ENCODE measurements at regions of chr17 and their contacts with region 1.

Region 1: DNA sequence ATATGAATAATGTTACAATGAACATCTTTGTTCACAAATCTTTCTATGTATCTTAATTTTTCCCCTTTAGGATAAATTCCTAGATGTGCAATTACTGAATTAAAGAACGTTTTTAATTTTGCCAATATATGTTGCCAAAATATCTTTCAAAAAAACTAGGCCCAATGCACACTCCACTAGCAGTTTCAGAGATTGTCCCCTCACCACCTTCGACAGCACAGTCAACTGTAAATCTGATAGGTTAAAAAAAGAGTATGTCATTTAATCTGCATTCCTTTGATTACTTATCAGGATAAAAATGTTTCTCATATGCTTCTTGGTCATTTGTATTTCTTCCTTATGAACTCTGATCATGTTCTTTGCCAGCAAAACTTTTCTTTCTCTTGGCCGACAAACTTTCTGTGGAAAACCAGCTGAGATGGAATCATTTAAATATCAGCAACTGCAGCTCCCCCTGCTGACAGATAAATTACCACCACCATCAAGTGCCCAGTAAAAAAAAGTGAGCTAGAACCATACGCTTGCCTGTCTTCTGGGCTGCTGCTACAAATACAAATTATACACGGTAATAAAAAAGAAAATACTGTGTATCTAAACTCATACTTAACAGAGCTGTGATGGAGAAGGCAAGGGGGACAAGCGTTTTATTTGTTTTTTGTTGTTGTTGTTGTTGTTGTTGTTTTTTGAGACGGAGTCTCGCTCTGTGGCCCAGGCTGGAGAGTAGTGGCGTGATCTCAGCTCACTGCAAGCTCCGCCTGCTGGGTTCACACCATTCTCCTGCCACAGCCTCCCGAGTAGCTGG is 19.6 kb upstream of the KANSL1 start:
- DNase-seq: peak; percentile 33 to 90 (median 63)
- ATAC-seq: peak; percentile 88
- H3K4me3 ChIP-seq: no peak overlapping the region
- H3K4me3 Mint-ChIP-seq: no peak overlapping the region
- H3K27ac ChIP-seq: no peak overlapping the region
- H3K27ac Mint-ChIP-seq: peak overlapping the region; percentile 38
- H3K4me1 ChIP-seq: peaks cover 14% of the 10 kb centered on the region
- H3K4me1 Mint-ChIP-seq: peaks cover 26% of the 10 kb centered on the region
- H3K27me3 ChIP-seq: no peaks in the 10 kb centered on the region
- H3K27me3 Mint-ChIP-seq: no peaks in the 10 kb centered on the region
- CTCF ChIP-seq: peak; percentile 85

Region 2: DNA sequence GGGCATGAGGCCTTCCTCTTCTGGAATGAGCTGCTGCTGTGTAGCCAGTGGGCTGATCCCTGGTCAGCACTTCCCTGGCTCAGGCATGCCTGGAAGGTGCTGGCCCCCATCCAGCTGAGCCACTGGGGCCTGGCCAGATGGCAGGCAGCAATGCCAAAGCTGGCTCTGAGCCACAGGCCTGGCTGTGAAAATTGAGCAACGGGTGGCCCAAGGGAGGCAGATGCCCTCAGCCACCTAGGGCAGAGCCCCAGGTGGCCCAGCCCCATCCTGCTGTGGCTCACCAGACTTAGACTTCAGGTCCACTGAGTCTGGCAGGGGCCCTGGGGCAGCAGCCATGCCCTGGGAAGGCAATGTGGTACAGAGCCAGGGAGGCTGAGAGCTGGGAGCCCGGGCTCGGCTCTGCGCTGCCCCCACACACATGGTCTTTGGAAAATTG is 437.2 kb before region 1 on chr17:
- CTCF ChIA-PET with region 1: no interaction called
- POLR2A ChIA-PET with region 1: no interaction called
- intact Hi-C with region 1: no loop called
- DNase-seq: no peak
- ATAC-seq: no peak
- H3K4me3 ChIP-seq: no peak overlapping the region
- H3K4me3 Mint-ChIP-seq: no peak overlapping the region
- H3K27ac ChIP-seq: no peak overlapping the region
- H3K27ac Mint-ChIP-seq: no peak overlapping the region
- H3K4me1 ChIP-seq: no peaks in the 10 kb centered on the region
- H3K4me1 Mint-ChIP-seq: no peaks in the 10 kb centered on the region
- H3K27me3 ChIP-seq: no peaks in the 10 kb centered on the region
- H3K27me3 Mint-ChIP-seq: peaks cover 49% of the 10 kb centered on the region
- CTCF ChIP-seq: no peak

Region 3: GRCh38 chr17:46035112-46035818 is 177.6 kb before region 1 on chr17:
- CTCF ChIA-PET with region 1: interaction called, 14 read pairs
- POLR2A ChIA-PET with region 1: no interaction called
- intact Hi-C with region 1: no loop called
- DNase-seq: peak in 2 of 9 experiments; percentile 55 to 63
- ATAC-seq: no peak
- H3K4me3 ChIP-seq: no peak overlapping the region
- H3K4me3 Mint-ChIP-seq: no peak overlapping the region
- H3K27ac ChIP-seq: peak overlapping the region in 1 of 2 experiments; percentile 21
- H3K27ac Mint-ChIP-seq: peak overlapping the region; percentile 60
- H3K4me1 ChIP-seq: no peaks in the 10 kb centered on the region
- H3K4me1 Mint-ChIP-seq: peaks cover 3% of the 10 kb centered on the region
- H3K27me3 ChIP-seq: no peaks in the 10 kb centered on the region
- H3K27me3 Mint-ChIP-seq: no peaks in the 10 kb centered on the region
- CTCF ChIP-seq: no peak

Region 4: DNA sequence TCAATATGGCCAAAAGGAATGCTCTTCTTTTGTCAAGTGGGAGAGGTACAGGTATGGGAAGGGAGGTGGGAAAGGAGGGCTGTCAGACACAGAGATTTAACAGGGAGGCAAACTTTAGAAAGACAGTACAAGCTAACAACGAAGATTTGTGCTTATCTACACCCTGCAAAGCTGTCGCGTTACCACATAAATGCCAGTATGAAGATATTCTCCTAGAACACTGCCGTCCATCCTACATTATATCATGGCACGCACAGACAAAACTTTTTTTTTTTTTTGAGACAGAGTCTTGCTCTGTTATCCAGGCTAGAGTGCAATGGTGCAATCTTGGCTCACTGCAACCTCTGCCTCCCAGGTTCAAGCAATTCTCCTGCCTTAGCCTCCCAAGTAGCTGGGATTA is 163.2 kb before region 1 on chr17:
- CTCF ChIA-PET with region 1: interaction called, 67 read pairs
- POLR2A ChIA-PET with region 1: interaction called, 5 read pairs
- intact Hi-C with region 1: loop called (anchors 1 kb)
- DNase-seq: no peak
- ATAC-seq: no peak
- H3K4me3 ChIP-seq: no peak overlapping the region
- H3K4me3 Mint-ChIP-seq: no peak overlapping the region
- H3K27ac ChIP-seq: no peak overlapping the region
- H3K27ac Mint-ChIP-seq: peak overlapping the region; percentile 55
- H3K4me1 ChIP-seq: peaks cover 4% of the 10 kb centered on the region
- H3K4me1 Mint-ChIP-seq: peaks cover 26% of the 10 kb centered on the region
- H3K27me3 ChIP-seq: no peaks in the 10 kb centered on the region
- H3K27me3 Mint-ChIP-seq: no peaks in the 10 kb centered on the region
- CTCF ChIP-seq: no peak

Region 5: GRCh38 chr17:46121841-46122485 is 90.9 kb before region 1 on chr17:
- CTCF ChIA-PET with region 1: no interaction called
- POLR2A ChIA-PET with region 1: no interaction called
- intact Hi-C with region 1: no loop called
- DNase-seq: peak in 1 of 9 experiments; percentile 46
- ATAC-seq: peak; percentile 27
- H3K4me3 ChIP-seq: no peak overlapping the region
- H3K4me3 Mint-ChIP-seq: peak overlapping the region; percentile 44
- H3K27ac ChIP-seq: peak overlapping the region in 1 of 2 experiments; percentile 47
- H3K27ac Mint-ChIP-seq: peak overlapping the region; percentile 87
- H3K4me1 ChIP-seq: peaks cover 74% of the 10 kb centered on the region
- H3K4me1 Mint-ChIP-seq: peaks cover 85% of the 10 kb centered on the region
- H3K27me3 ChIP-seq: no peaks in the 10 kb centered on the region
- H3K27me3 Mint-ChIP-seq: no peaks in the 10 kb centered on the region
- CTCF ChIP-seq: no peak

Region 6: DNA sequence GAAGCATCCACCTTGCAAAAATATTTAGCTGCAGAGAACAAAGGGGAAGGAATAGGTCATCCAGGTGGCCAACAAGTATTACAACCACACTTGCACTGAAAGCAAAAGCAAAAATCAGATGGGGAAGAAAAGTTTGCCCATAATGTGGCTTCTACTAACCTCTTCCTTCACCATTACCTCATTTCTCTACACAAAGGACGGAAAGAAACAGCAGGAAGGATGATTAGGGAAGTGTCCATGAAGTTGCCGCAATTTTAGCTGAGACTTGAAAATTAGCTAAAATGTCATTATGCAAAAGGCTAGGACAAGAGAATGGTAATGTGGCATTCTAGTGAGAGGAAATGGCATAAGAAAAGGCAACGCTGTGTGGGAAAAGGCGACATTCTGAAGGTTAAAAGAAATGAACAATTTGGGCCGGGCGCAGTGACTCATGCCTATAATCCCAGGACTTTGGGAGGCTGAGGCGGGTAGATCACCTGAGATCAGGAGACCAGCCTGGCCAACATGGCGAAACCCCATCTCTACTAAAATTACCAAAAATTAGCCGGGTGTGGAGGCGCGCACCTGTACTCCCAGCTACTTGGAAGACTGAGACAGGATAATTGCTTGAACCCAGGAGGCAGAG is 33.3 kb before region 1 on chr17:
- CTCF ChIA-PET with region 1: interaction called, 11 read pairs
- POLR2A ChIA-PET with region 1: interaction called, 3 read pairs
- intact Hi-C with region 1: no loop called
- DNase-seq: peak in 1 of 9 experiments; percentile 40
- ATAC-seq: no peak
- H3K4me3 ChIP-seq: no peak overlapping the region
- H3K4me3 Mint-ChIP-seq: peak overlapping the region; percentile 46
- H3K27ac ChIP-seq: no peak overlapping the region
- H3K27ac Mint-ChIP-seq: peak overlapping the region; percentile 70
- H3K4me1 ChIP-seq: peaks cover 84% of the 10 kb centered on the region
- H3K4me1 Mint-ChIP-seq: peaks cover 94% of the 10 kb centered on the region
- H3K27me3 ChIP-seq: no peaks in the 10 kb centered on the region
- H3K27me3 Mint-ChIP-seq: no peaks in the 10 kb centered on the region
- CTCF ChIP-seq: no peak

Region 7: GRCh38 chr17:46199379-46199778 is 13.5 kb before region 1 on chr17:
- CTCF ChIA-PET with region 1: interaction called, 25 read pairs
- POLR2A ChIA-PET with region 1: interaction called, 5 read pairs
- intact Hi-C with region 1: loop called in 1 of 2 experiments (anchors 1 kb)
- DNase-seq: no peak
- ATAC-seq: no peak
- H3K4me3 ChIP-seq: no peak overlapping the region
- H3K4me3 Mint-ChIP-seq: no peak overlapping the region
- H3K27ac ChIP-seq: no peak overlapping the region
- H3K27ac Mint-ChIP-seq: peak overlapping the region; percentile 11
- H3K4me1 ChIP-seq: peaks cover 47% of the 10 kb centered on the region
- H3K4me1 Mint-ChIP-seq: peaks cover 64% of the 10 kb centered on the region
- H3K27me3 ChIP-seq: no peaks in the 10 kb centered on the region
- H3K27me3 Mint-ChIP-seq: no peaks in the 10 kb centered on the region
- CTCF ChIP-seq: no peak

Region 8: DNA sequence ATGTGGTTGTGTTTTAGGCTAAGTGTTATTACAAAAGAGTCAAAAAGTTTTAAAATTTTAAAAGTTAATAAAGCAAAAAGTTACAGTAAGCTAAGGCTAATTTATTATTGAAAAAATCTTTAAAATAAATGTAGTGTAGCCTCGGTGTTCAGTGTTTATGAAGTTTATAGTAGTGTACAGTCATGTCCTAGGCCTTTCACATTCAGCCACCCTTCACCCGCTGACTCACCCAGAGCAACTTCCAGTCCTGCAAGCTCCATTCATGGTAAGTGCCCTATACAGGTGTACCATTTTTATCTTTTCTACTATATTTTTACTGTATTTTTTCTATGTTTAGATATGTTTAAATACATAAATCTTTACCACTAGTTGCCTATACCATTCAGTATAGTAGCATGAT is 864.7 kb after region 1 on chr17:
- CTCF ChIA-PET with region 1: no interaction called
- POLR2A ChIA-PET with region 1: no interaction called
- intact Hi-C with region 1: no loop called
- DNase-seq: no peak
- ATAC-seq: no peak
- H3K4me3 ChIP-seq: no peak overlapping the region
- H3K4me3 Mint-ChIP-seq: no peak overlapping the region
- H3K27ac ChIP-seq: no peak overlapping the region
- H3K27ac Mint-ChIP-seq: no peak overlapping the region
- H3K4me1 ChIP-seq: no peaks in the 10 kb centered on the region
- H3K4me1 Mint-ChIP-seq: peaks cover 4% of the 10 kb centered on the region
- H3K27me3 ChIP-seq: no peaks in the 10 kb centered on the region
- H3K27me3 Mint-ChIP-seq: no peaks in the 10 kb centered on the region
- CTCF ChIP-seq: no peak